Lower lobe of right lung (tissue), 2 donors: ENCODE measurements at regions of chr22 and their contacts with region 1.

Region 1: DNA sequence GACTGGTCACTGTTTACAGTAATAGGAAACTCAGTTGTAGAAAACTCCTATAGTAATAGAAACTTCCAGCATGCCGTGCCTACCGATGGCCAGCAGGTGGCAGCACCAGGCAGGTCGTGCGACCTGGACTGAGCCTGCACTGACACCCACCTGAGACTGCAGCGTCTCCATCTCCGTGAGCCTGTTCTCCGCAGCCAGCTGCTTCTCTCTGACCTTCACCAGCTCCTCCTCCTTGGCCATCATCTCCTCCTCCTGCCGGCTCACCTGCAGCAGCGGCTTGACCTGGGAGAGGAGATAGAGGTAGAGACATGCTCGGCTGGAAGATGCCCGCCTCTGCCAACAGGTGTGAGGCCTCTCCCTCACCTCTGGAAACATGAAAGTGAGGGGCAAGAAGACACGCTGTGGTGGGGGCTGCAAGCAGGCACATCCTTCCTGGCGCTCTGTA is 48.5 kb downstream of the APOL1 start:
- DNase-seq: peak; percentile 82
- ATAC-seq: peak; percentile 73 to 81
- H3K4me3 ChIP-seq: no peak overlapping the region
- H3K27ac ChIP-seq: no peak overlapping the region
- H3K4me1 ChIP-seq: peaks cover 7% of the 10 kb centered on the region
- H3K27me3 ChIP-seq: no peaks in the 10 kb centered on the region
- CTCF ChIP-seq: peak; percentile 91

Region 2: DNA sequence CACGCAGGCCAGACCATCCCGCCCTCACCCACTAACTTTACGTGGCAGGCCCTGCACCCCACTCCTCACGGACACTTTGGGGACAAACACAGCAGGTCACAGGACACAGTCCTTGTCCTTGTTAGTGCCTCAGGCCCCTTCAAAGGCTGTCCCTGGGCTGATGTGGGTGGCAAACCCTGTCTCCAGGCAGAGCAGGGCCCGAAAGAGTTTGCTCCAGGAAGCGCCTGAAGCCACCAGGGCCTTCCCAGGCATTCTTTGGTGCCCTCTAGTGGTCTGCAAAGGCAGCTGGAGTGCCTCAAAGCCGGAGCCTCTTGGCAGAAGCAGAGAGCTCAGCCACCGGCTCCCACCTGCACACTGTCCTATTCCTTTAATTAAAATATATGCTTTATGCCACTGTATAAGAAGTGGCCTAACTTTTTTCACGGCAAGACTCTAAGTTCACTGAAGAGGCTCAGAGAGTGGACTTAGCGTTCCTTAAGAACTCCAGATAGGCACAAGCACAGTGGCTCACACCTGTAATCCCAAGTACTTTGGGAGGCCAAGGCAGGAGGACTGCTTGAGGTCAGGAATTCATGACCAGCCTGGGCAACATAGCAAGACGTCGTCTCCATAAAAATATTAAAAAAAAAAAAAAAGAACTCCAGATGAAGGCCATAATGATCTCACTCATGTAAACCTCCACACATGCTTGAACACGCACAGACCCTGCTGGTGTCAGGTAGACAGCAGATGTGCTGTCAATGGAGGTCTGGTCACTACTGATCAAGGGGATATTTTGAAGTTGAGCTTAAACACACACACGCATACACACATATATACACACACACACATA is 169.0 kb after region 1 on chr22:
- intact Hi-C with region 1: loop called (anchors 10 kb)
- DNase-seq: peak; percentile 86
- ATAC-seq: peak; percentile 82 to 90
- H3K4me3 ChIP-seq: no peak overlapping the region
- H3K27ac ChIP-seq: peak overlapping the region; percentile 65
- H3K4me1 ChIP-seq: peaks cover 57% of the 10 kb centered on the region
- H3K27me3 ChIP-seq: no peaks in the 10 kb centered on the region
- CTCF ChIP-seq: peak; percentile 99